ENCODE measurements at regions of chr1 and their contacts with region 1.

Region 1: DNA sequence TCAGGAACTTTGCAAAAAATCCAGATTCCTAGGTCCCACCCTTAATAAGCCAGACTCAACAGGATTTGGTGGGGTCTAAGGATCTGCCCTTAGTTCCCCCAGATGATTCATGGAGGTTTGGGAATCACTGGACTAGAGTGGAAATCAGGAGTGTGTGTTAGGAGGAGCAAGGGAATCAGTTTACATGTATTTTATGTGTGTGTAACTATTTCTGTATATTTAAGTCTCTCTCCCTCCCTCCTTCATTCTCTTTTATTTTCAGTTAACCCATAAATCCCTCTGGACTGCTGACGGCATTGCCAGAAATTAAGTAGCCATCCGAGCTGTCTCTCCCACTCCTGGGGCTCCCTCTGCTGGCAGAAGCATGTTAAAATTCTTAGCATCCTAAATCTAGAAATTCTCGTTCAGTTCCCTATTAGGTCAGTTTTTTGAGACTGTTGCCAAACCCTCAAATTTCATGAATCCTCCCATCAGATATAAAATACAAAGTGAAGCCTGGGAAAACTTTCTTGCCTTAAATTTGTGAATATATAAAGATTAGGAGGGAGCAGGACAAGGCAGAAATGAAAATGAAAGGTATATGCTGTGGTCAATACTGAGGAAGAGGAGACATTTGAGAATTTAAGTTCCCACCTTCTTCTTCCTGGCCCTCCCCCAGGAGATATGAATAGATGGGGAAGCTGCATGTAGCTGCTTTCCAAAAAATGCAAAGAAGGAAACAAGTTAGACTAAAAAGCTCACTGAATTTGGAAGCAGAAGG is 11.7 kb upstream of the HSD11B1 start:
- DNase-seq: peak; percentile 79
- H3K4me3 ChIP-seq: no peak overlapping the region
- H3K27ac ChIP-seq: no peak overlapping the region
- H3K4me1 ChIP-seq: no peaks in the 10 kb centered on the region
- H3K27me3 ChIP-seq: peaks cover 9 to 13% of the 10 kb centered on the region in 2 experiments
- CTCF ChIP-seq: peak; percentile 66 to 80
- POLR2A ChIP-seq: no peak

Region 2: GRCh38 chr1:209576798-209577197 is 116.1 kb before region 1 on chr1:
- CTCF ChIA-PET with region 1: interaction called, 29 read pairs
- POLR2A ChIA-PET with region 1: no interaction called
- dilution Hi-C with region 1: loop called (anchors 25 kb)
- intact Hi-C with region 1: loop called (anchors 1 kb)
- DNase-seq: peak; percentile 72
- H3K4me3 ChIP-seq: no peak overlapping the region
- H3K27ac ChIP-seq: no peak overlapping the region
- H3K4me1 ChIP-seq: peaks cover 8% of the 10 kb centered on the region
- H3K27me3 ChIP-seq: peaks cover 13 to 17% of the 10 kb centered on the region in 2 experiments
- CTCF ChIP-seq: peak; percentile 94 to 95
- POLR2A ChIP-seq: no peak

Region 3: DNA sequence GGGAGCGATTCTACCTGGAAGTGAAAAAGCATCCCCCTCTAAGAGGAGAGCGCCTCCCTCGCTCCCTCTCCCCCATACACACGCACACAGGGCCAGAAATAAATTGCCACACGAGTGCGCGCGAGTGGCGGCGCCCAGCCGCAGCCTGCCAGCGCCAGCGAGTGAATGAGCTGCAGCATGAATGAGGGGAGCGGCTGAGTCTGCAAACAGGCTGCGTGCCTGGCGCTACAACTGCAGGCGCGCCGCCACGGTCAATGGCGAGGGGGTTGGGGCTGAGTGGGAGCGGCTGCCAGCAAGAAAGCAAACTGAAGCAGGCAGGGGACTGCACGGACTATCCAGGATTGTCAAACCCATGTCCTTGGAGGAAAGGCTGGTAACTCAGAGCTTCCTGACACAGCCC is 107.3 kb before region 1 on chr1:
- CTCF ChIA-PET with region 1: interaction called, 22 read pairs
- POLR2A ChIA-PET with region 1: no interaction called
- dilution Hi-C with region 1: loop called (anchors 25 kb)
- intact Hi-C with region 1: no loop called
- DNase-seq: no peak
- H3K4me3 ChIP-seq: no peak overlapping the region
- H3K27ac ChIP-seq: no peak overlapping the region
- H3K4me1 ChIP-seq: peaks cover 9% of the 10 kb centered on the region
- H3K27me3 ChIP-seq: peaks cover 42 to 43% of the 10 kb centered on the region in 2 experiments
- CTCF ChIP-seq: no peak
- POLR2A ChIP-seq: no peak

Region 4: DNA sequence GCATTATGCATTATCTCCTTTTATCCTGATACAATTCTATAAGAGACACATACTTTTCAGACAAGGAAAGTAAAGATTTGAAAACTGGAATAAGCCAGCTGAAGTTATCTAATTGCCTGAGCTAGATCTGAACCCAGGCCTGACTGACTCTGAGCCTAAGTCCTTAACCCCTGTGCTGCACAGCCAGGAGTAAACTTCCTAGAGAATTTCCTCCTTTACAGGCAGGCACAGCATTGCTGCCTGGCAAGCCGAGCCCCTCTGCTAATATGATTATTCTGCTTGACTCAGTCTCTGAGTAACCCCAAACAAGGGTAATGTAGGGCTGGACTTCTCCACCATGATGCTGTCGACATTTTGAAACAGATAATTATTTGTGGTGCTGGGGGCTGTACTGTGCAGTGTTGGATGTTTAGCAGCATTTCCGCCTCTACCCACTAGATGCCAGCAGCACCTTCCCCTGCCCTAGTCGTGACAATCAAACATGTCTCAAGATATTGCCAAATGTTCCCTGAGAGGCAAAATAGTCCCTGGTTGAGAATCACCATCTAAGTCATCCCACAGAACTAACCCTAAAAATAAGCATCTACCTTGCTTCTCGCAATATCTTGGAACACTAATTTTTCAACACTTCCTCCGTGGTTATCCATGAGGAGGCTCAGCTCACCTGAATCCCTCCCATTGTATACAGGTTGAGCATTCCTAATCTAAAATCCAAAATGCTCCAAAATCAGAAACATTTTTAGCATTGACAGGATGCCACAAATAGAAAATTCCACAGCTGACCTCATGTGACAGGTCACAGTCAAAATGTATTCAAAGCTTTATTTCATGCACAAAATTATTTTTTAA is 90.9 kb before region 1 on chr1:
- CTCF ChIA-PET with region 1: interaction called, 6 read pairs
- POLR2A ChIA-PET with region 1: no interaction called
- dilution Hi-C with region 1: loop called (anchors 25 kb)
- intact Hi-C with region 1: loop called (anchors 1 kb)
- DNase-seq: peak; percentile 45
- H3K4me3 ChIP-seq: no peak overlapping the region
- H3K27ac ChIP-seq: no peak overlapping the region
- H3K4me1 ChIP-seq: peaks cover 5% of the 10 kb centered on the region
- H3K27me3 ChIP-seq: peaks cover 3 to 18% of the 10 kb centered on the region in 2 experiments
- CTCF ChIP-seq: peak; percentile 62 to 66
- POLR2A ChIP-seq: no peak

Region 5: GRCh38 chr1:209651148-209651547 is 41.8 kb before region 1 on chr1:
- CTCF ChIA-PET with region 1: interaction called, 8 read pairs
- POLR2A ChIA-PET with region 1: no interaction called
- dilution Hi-C with region 1: no loop called
- intact Hi-C with region 1: loop called (anchors 5 kb)
- DNase-seq: peak; percentile 77
- H3K4me3 ChIP-seq: no peak overlapping the region
- H3K27ac ChIP-seq: peak overlapping the region; percentile 60
- H3K4me1 ChIP-seq: peaks cover 27% of the 10 kb centered on the region
- H3K27me3 ChIP-seq: no peaks in the 10 kb centered on the region
- CTCF ChIP-seq: no peak
- POLR2A ChIP-seq: no peak

Region 6: GRCh38 chr1:209674957-209675564 is 17.9 kb before region 1 on chr1 and contains the start of gene G0S2:
- CTCF ChIA-PET with region 1: interaction called, 14 read pairs
- POLR2A ChIA-PET with region 1: no interaction called
- dilution Hi-C with region 1: no loop called
- intact Hi-C with region 1: no loop called
- DNase-seq: no peak
- H3K4me3 ChIP-seq: peak within 1 kb of the TSS in 1 of 3 experiments; percentile 28
- H3K27ac ChIP-seq: no peak within 1 kb of the TSS
- H3K4me1 ChIP-seq: peaks cover 6% of the 10 kb centered on the region
- H3K27me3 ChIP-seq: peaks cover 36 to 69% of the 10 kb centered on the region in 2 experiments
- CTCF ChIP-seq: no peak
- POLR2A ChIP-seq: peak; percentile 60
- total RNA-seq, gene G0S2: 1.9 TPM in 1 of 2 replicates, not detected in the other

Region 7: GRCh38 chr1:209723756-209724693 is 31.1 kb after region 1 on chr1:
- CTCF ChIA-PET with region 1: no interaction called
- POLR2A ChIA-PET with region 1: no interaction called
- dilution Hi-C with region 1: no loop called
- intact Hi-C with region 1: no loop called
- DNase-seq: no peak
- H3K4me3 ChIP-seq: no peak overlapping the region
- H3K27ac ChIP-seq: no peak overlapping the region
- H3K4me1 ChIP-seq: no peaks in the 10 kb centered on the region
- H3K27me3 ChIP-seq: peaks cover 5 to 7% of the 10 kb centered on the region in 2 experiments
- CTCF ChIP-seq: no peak
- POLR2A ChIP-seq: no peak

Measured in endothelial cell of umbilical vein (primary cell).